ENCODE measurements at regions of chr6 and their contacts with region 1.

Region 1: DNA sequence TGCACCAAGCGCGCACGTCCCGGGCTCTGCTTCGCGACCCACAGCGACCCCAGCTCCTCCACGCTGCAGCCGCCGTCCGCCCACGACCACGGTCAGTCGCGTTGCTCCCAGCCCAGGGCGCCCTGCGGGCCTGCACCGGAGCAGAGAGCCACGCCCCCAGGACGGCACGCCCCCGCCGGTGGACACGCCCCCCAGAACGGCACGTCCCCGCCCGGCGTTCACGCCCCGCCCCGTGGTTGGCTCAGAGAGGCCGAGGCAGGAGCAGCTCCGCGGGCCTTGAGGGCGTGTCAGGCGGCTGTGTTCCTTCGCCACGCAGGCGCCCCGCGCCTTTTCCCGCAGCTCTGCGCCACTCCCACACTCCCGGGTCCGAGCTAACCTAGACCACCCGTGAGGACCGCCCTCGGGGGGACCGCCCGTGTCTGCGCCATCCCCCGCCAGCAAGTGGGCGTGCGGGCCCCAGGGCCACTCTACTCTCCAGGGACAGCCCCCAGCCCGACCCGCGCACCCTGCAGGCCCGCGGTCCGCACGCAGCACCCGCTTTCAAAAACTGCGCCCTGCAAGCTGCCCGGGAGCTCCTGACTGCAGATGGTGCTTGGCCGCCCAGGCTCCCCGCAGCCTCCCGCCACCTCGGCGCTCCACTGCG is at the start of gene RNASET2:
- DNase-seq: peak; percentile 97
- H3K4me3 Mint-ChIP-seq: peak within 1 kb of the TSS; percentile 96
- H3K27ac Mint-ChIP-seq: peak within 1 kb of the TSS; percentile 99
- H3K4me1 Mint-ChIP-seq: peaks cover 69% of the 10 kb centered on the region
- H3K27me3 Mint-ChIP-seq: no peaks in the 10 kb centered on the region
- total RNA-seq, gene RNASET2: 53.4 and 56.2 TPM in 2 replicates

Region 2: GRCh38 chr6:166830185-166830890 is 126.2 kb before region 1 on chr6:
- intact Hi-C with region 1: loop called (anchors 1 kb)
- DNase-seq: no peak
- H3K4me3 Mint-ChIP-seq: no peak overlapping the region
- H3K27ac Mint-ChIP-seq: peak overlapping the region; percentile 76
- H3K4me1 Mint-ChIP-seq: peaks cover 20% of the 10 kb centered on the region
- H3K27me3 Mint-ChIP-seq: peaks cover 4% of the 10 kb centered on the region

Region 3: GRCh38 chr6:166942393-166943168 is 14.0 kb before region 1 on chr6:
- intact Hi-C with region 1: loop called (anchors 1 kb)
- DNase-seq: peak; percentile 61
- H3K4me3 Mint-ChIP-seq: peak overlapping the region; percentile 56
- H3K27ac Mint-ChIP-seq: peak overlapping the region; percentile 94
- H3K4me1 Mint-ChIP-seq: peaks cover 29% of the 10 kb centered on the region
- H3K27me3 Mint-ChIP-seq: no peaks in the 10 kb centered on the region

Region 4: DNA sequence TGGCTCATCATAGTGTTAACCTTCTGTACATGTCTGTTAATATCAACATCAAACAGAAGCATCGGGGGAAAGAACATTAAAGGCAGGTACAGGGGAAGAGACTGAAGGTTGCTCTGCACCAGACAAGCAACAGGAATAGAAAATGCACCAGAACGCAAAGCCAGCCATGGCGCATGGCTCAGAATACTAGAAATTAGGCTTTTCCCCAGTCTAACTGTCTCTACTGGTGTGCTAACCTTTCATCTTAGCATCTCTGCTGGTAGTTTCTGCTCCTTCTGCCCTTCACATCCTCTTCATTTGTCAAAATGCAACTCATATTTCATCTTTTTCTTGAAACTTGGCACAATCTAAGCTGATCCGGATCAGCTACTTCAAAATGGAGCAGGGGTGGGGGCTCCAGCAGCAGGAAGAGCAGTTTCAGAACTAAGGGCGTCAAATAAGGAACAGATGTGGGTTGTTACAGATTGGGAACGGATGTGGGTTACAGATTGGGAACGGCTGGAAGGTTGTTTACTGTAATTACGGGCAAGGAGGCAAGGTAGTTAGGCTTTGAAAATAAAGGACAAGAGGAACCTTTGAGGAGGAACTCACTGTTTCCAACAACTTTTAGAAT is 12.9 kb after region 1 on chr6:
- intact Hi-C with region 1: loop called (anchors 1 kb)
- DNase-seq: no peak
- H3K4me3 Mint-ChIP-seq: peak overlapping the region; percentile 5
- H3K27ac Mint-ChIP-seq: peak overlapping the region; percentile 59
- H3K4me1 Mint-ChIP-seq: peaks cover 31% of the 10 kb centered on the region
- H3K27me3 Mint-ChIP-seq: no peaks in the 10 kb centered on the region

Region 5: DNA sequence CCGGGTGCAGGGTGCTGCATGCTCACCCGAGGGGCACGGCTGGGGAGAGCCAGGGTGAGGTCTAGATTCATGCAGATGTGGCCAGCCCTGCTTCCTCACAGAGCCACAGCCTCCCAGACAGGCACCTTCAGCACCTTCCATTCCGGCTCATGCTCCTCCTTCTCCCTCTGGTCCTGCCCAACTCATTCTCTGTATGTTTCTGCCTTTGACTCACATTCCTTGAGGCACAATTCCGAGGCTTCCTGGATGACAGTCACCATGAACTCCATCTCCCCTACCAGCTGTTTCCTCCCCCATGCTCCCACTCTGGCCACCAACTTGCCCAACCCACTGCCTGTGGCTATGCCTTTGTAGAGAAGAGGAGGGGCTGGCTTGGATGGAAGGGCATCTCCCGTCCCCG is 1327.7 kb after region 1 on chr6:
- intact Hi-C with region 1: loop called (anchors 10 kb)
- DNase-seq: no peak
- H3K4me3 Mint-ChIP-seq: no peak overlapping the region
- H3K27ac Mint-ChIP-seq: no peak overlapping the region
- H3K4me1 Mint-ChIP-seq: peaks cover 20% of the 10 kb centered on the region
- H3K27me3 Mint-ChIP-seq: no peaks in the 10 kb centered on the region

Measured in activated T-helper 2 cell treated with anti-CD3 and anti-CD28 coated beads, Interferon-gamma antibody, Interleukin-2, Interleukin-4, amounts not matched to agents 10 μg/mL and 5 μg/mL and 100 μg/mL, durations not matched to agents 14 hours and 24 hours and 36 hours (primary cell).